ENCODE measurements at regions of chr4 and their contacts with region 1.

Region 1: DNA sequence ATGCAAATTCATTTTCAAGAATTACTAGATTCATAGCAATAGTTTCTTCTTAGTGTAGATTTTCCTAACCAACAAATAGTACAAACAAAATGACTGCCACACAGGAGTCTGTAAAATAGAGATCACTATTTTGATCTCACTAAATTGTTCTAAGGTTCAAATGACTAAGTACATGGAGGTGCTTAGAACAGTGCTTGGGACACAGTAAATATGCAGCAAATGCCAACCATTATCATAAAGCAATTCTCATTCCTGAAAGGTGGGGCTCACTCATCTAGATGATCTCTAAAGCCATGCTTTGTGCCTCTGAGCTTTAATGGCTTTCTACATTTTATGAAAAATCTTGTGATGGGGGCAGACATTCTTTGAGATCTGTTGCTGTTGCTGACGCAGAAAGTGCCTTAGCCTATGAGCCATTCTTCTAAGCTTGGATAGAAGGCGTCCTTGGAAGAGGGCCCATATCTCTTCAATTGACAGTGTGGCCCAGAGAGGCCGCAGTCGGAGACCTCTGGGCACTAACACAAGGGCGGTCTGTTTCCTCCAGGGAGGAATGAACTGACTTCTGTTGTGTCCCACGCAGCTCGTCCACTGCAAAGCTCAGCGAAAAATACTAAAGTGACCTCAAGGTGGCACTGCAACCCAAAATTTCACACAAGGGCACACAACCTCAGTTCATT is 23.5 kb downstream of the TLR10 start:
- DNase-seq: peak; percentile 52 to 93 (median 87)
- H3K4me3 ChIP-seq: peak overlapping the region in 8 of 59 donors; percentile 1 to 40 (median 12)
- H3K27ac ChIP-seq: peak overlapping the region in 58 of 59 donors; percentile 35 to 96 (median 86)
- H3K27me3 ChIP-seq: no peaks in the 10 kb centered on the region
- CTCF ChIP-seq: peak; percentile 72 to 96 (median 88)

Region 2: GRCh38 chr4:37686373-37687193 is 1072.7 kb before region 1 on chr4 and contains the start of gene RELL1:
- intact Hi-C with region 1: loop called in 1 of 2 experiments (anchors 5 kb)
- DNase-seq: peak; percentile 98 to 100 (median 99)
- H3K4me3 ChIP-seq: peak within 1 kb of the TSS; percentile 66 to 98 (median 91)
- H3K27ac ChIP-seq: peak within 1 kb of the TSS; percentile 50 to 95 (median 89)
- H3K27me3 ChIP-seq: no peaks in the 10 kb centered on the region
- CTCF ChIP-seq: peak in 14 of 56 donors; percentile 5 to 49 (median 18)
- total RNA-seq, gene RELL1: 9.3 to 58.1 (median 21.9) TPM

Region 3: DNA sequence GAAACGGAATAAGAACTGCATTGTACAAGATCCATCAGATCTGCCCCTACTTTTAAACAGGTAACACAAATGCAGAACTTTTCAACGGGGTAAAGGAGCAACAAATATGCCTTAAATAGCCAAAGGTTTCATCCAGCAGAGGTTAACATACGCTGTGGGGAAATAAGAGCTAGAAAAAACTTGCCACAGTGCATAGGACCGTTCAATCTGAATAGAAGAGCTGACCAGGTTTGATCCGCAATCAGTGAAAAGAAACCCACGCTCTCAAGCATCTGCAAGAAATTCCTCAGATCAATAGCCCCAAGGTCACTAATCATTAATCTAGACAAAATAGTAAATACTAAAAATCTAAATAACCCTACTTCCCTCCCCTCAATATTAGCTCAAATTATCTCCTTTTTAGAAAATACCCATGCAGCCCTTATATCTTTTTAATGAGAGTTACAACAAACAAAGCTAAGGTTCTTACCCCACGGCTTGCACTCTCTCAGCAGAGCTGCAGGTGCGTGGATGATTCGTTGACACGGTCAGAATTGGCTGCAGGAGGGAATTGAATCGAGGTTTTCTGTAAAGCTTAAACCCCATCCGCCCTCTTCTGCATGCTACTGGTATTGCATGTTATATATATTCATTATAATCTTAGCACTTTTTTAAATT is 23.3 kb after region 1 on chr4 and contains the start of gene TLR10:
- intact Hi-C with region 1: loop called in 1 of 2 experiments (anchors 2 kb)
- DNase-seq: peak in 2 of 10 donors; percentile 30 to 42
- H3K4me3 ChIP-seq: peak within 1 kb of the TSS in 38 of 59 donors; percentile 4 to 55 (median 28)
- H3K27ac ChIP-seq: peak within 1 kb of the TSS in 1 of 59 donors; percentile 15
- H3K27me3 ChIP-seq: no peaks in the 10 kb centered on the region
- CTCF ChIP-seq: peak; percentile 64 to 89 (median 82)
- total RNA-seq, gene TLR10: 0.27 to 6.7 (median 1.5) TPM

Region 4: GRCh38 chr4:38856524-38857337 is 97.5 kb after region 1 on chr4 and contains the start of gene TLR6:
- intact Hi-C with region 1: loop called in 1 of 2 experiments (anchors 5 kb)
- DNase-seq: peak in 2 of 10 donors; percentile 18 to 38
- H3K4me3 ChIP-seq: peak within 1 kb of the TSS in 53 of 59 donors; percentile 1 to 61 (median 34)
- H3K27ac ChIP-seq: peak within 1 kb of the TSS in 56 of 59 donors; percentile 7 to 86 (median 64)
- H3K27me3 ChIP-seq: no peaks in the 10 kb centered on the region
- CTCF ChIP-seq: peak; percentile 55 to 86 (median 76)
- total RNA-seq, gene TLR6: 1.1 to 8.9 (median 3.7) TPM

Region 5: GRCh38 chr4:38902695-38903094 is 143.4 kb after region 1 on chr4:
- intact Hi-C with region 1: loop called in 1 of 2 experiments (anchors 5 kb)
- DNase-seq: no peak
- H3K4me3 ChIP-seq: no peak overlapping the region
- H3K27ac ChIP-seq: peak overlapping the region in 2 of 59 donors; percentile 6 to 39
- H3K27me3 ChIP-seq: no peaks in the 10 kb centered on the region
- CTCF ChIP-seq: peak in 55 of 56 donors; percentile 30 to 79 (median 61)

Region 6: DNA sequence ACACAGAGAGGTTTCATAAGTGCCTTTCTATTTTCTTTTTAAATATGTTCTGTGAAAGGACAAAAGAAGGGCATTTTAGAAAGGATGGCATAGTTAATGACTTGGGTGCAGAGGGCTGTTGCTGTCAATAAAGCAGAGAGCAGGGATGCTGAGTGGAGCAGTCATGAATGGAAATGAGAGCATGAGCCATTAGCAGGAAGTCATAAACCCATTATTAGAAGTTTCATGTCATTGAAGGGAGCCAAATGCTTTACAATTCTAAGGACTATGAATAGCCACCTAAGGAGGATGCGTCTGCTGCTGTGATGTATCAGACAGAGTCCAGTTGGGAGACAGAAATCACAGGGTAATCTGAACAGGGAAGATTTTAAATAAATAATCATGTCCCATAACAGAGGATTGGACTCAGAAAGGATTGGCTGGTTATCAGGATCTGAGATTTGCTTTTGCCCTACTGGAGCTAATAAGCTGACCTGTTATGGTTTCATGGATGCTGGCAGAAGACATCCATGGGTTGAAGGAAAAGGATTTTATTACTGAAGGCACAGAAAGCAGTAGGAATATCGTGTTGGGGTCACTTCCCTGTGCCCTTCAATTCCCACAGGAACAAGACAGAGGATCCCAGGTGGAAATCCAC is 375.6 kb after region 1 on chr4:
- intact Hi-C with region 1: loop called (anchors 2 to 10 kb)
- DNase-seq: no peak
- H3K4me3 ChIP-seq: peak overlapping the region in 30 of 59 donors; percentile 1 to 53 (median 20)
- H3K27ac ChIP-seq: peak overlapping the region in 37 of 59 donors; percentile 2 to 77 (median 38)
- H3K27me3 ChIP-seq: no peaks in the 10 kb centered on the region
- CTCF ChIP-seq: no peak

Region 7: GRCh38 chr4:39308611-39309010 is 549.4 kb after region 1 on chr4:
- intact Hi-C with region 1: no loop called
- DNase-seq: peak in 2 of 10 donors; percentile 15 to 26
- H3K4me3 ChIP-seq: no peak overlapping the region
- H3K27ac ChIP-seq: peak overlapping the region in 48 of 59 donors; percentile 0 to 73 (median 46)
- H3K27me3 ChIP-seq: no peaks in the 10 kb centered on the region
- CTCF ChIP-seq: no peak

Measured in dorsolateral prefrontal cortex (tissue), 120 donors.